Heart right ventricle (tissue), 16 donors: ENCODE measurements at regions of chr7 and their contacts with region 1.

Region 1: DNA sequence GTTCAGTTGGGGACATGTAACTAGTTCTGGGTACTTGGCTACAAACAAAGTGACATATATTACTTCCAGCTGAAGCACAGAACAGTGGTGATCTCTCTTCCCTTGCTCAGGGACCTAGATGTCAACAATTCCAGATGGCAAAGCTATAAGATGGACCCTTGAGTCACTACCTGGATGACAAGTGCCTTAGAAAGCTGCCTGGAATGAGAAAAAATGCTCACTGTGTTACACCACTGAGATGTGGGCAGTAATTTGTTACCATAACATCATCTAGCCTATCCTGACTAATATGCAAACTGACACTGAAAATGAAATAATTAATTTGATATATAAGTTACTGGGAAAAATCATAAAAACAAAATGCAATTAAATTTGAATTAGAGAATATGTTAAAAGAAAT is 16.4 kb upstream of the CTTNBP2 start:
- DNase-seq: no peak
- ATAC-seq: no peak
- H3K4me3 ChIP-seq: no peak overlapping the region
- H3K27ac ChIP-seq: no peak overlapping the region
- H3K4me1 ChIP-seq: no peaks in the 10 kb centered on the region
- H3K27me3 ChIP-seq: no peaks in the 10 kb centered on the region
- CTCF ChIP-seq: no peak

Region 2: GRCh38 chr7:117856196-117856595 is 33.4 kb before region 1 on chr7:
- intact Hi-C with region 1: loop called in 1 of 10 experiments (anchors 2 kb)
- DNase-seq: no peak
- ATAC-seq: no peak
- H3K4me3 ChIP-seq: no peak overlapping the region
- H3K27ac ChIP-seq: no peak overlapping the region
- H3K4me1 ChIP-seq: no peaks in the 10 kb centered on the region
- H3K27me3 ChIP-seq: no peaks in the 10 kb centered on the region
- CTCF ChIP-seq: no peak

Region 3: DNA sequence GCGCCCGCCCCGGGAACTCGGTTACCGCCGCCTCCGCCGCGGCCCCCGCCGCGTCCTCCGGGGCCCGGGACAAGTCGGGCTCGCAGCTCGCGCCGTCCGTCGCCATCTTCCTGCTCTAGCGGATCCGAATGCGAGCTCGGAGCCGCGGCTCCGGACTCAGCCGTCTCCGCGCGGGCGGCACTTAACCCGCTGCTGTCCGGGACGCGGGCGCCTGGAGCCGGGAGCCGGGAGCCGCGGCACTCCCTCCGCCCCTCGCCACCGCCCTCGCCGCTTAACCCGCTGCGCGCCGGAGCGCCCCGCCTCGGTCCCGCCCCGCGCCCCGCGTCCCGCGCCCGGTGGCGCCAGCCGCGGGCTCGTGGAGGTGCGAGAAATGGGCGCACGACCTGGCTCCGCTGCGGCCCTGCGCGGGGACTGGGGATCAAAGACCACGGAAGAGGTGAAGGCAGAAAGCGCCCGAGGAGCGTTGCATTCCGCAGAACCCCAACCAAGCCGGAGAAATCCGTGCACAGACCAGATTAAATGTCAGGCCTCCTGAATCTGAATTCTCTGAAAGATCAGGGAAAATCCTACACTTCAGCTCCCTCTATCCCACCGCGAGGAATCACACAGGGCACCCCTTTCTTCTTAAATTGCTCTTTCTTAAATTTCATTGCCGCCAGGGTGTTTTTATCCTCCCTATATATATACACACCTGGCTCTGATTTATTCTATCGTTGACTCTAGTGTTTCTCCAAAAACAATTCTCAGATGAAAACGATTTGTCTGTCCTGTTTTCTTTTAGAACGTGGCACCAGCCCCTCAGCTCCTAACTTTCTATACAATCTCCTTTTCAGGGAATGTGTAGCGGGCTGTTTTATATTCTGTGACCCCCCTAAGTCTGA is 16.1 kb before region 1 on chr7 and contains the start of gene CTTNBP2:
- intact Hi-C with region 1: no loop called
- DNase-seq: peak; percentile 33 to 57
- ATAC-seq: peak; percentile 62 to 90 (median 78)
- H3K4me3 ChIP-seq: peak within 1 kb of the TSS; percentile 57 to 91 (median 80)
- H3K27ac ChIP-seq: peak within 1 kb of the TSS in 7 of 10 donors; percentile 22 to 76 (median 70)
- H3K4me1 ChIP-seq: peaks cover 0 to 29% (median 12%) of the 10 kb centered on the region in 9 donors
- H3K27me3 ChIP-seq: peaks cover 0 to 63% (median 17%) of the 10 kb centered on the region in 7 donors
- CTCF ChIP-seq: peak in 3 of 9 donors; percentile 11 to 30 (median 16)
- total RNA-seq, gene CTTNBP2: 0.49 to 2.0 (median 0.97) TPM